ENCODE measurements at regions of chr12 and their contacts with region 1.

Region 1: GRCh38 chr12:46179683-46180452 is 89.0 kb downstream of the SLC38A1 start:
- DNase-seq: peak; percentile 76
- ATAC-seq: peak; percentile 70
- H3K4me3 ChIP-seq: no peak overlapping the region
- H3K27ac ChIP-seq: peak overlapping the region; percentile 47
- H3K4me1 ChIP-seq: peaks cover 34% of the 10 kb centered on the region
- H3K27me3 ChIP-seq: no peaks in the 10 kb centered on the region
- CTCF ChIP-seq: no peak
- EP300 ChIP-seq: peak; percentile 78 to 85; a peak in 3 of 4 replicates
- POLR2A ChIP-seq: no peak
- RAD21 ChIP-seq: no peak

Region 2: GRCh38 chr12:45368841-45369489 is 810.9 kb before region 1 on chr12:
- CTCF ChIA-PET with region 1: no interaction called
- POLR2A ChIA-PET with region 1: no interaction called
- RAD21 ChIA-PET with region 1: no interaction called
- SMC1A ChIA-PET with region 1: no interaction called
- in situ Hi-C with region 1: no loop called
- intact Hi-C with region 1: no loop called
- DNase-seq: no peak
- ATAC-seq: no peak
- H3K4me3 ChIP-seq: no peak overlapping the region
- H3K27ac ChIP-seq: no peak overlapping the region
- H3K4me1 ChIP-seq: no peaks in the 10 kb centered on the region
- H3K27me3 ChIP-seq: no peaks in the 10 kb centered on the region
- CTCF ChIP-seq: no peak
- EP300 ChIP-seq: no peak
- POLR2A ChIP-seq: no peak
- RAD21 ChIP-seq: no peak

Region 3: GRCh38 chr12:45828402-45828801 is 351.5 kb before region 1 on chr12:
- CTCF ChIA-PET with region 1: no interaction called
- POLR2A ChIA-PET with region 1: no interaction called
- RAD21 ChIA-PET with region 1: no interaction called
- SMC1A ChIA-PET with region 1: no interaction called
- in situ Hi-C with region 1: no loop called
- intact Hi-C with region 1: no loop called
- DNase-seq: peak; percentile 12
- ATAC-seq: peak; percentile 92
- H3K4me3 ChIP-seq: no peak overlapping the region
- H3K27ac ChIP-seq: no peak overlapping the region
- H3K4me1 ChIP-seq: peaks cover 9% of the 10 kb centered on the region
- H3K27me3 ChIP-seq: no peaks in the 10 kb centered on the region
- CTCF ChIP-seq: no peak
- EP300 ChIP-seq: no peak
- POLR2A ChIP-seq: no peak
- RAD21 ChIP-seq: no peak

Region 4: DNA sequence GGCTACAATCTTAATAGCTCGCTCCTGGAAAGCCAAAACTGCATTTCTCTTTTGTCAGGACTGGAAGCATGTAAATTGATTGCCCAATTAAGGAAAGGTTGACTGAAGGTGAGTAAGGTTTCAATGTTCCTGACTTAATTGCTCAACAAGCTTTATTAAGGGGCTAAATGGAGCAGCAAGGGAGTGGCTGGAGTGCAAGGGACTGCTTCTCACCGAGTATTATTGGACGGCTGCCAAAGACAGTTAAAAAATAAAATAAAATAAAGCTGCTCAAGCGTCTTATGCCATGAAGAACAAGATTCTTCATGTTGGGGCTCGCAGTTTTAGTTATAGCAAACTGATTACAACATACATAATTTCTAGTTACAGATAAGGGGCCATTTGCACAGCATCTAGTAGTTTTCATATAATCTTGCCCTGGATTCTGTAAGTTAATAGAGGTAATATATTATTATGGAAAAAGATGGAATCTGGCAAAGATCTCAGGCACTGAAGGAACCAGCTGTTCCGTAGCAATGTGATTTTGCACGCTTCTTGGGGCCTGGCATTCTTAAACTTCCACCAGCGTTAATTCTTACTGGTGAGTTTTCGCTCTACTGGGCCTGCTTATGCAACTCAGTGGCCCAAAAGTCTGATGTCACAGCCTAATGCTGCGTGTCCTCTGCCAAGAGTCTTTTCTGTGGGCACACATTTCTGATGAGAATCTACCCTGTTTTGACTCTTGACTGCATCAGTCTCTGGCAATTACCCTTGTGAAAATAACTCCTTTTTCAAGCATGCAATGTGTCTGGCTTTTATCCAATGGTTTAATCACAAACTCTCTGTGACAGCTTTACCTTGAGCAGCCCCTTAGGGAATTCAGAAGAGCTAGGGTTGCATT is 19.5 kb before region 1 on chr12:
- CTCF ChIA-PET with region 1: interaction called, 30 read pairs
- POLR2A ChIA-PET with region 1: interaction called, 4 read pairs
- RAD21 ChIA-PET with region 1: interaction called, 14 read pairs
- SMC1A ChIA-PET with region 1: interaction called, 9 read pairs
- in situ Hi-C with region 1: no loop called
- intact Hi-C with region 1: loop called (anchors 2 kb)
- DNase-seq: no peak
- ATAC-seq: no peak; the same call in 2 of the 3 replicates
- H3K4me3 ChIP-seq: no peak overlapping the region
- H3K27ac ChIP-seq: no peak overlapping the region
- H3K4me1 ChIP-seq: no peaks in the 10 kb centered on the region
- H3K27me3 ChIP-seq: no peaks in the 10 kb centered on the region
- CTCF ChIP-seq: no peak
- EP300 ChIP-seq: no peak
- POLR2A ChIP-seq: no peak
- RAD21 ChIP-seq: no peak

Region 5: GRCh38 chr12:46263140-46264016 is 83.5 kb after region 1 on chr12:
- CTCF ChIA-PET with region 1: interaction called, 5 read pairs
- POLR2A ChIA-PET with region 1: interaction called, 16 read pairs
- RAD21 ChIA-PET with region 1: interaction called, 23 read pairs
- SMC1A ChIA-PET with region 1: interaction called, 31 read pairs
- in situ Hi-C with region 1: no loop called
- intact Hi-C with region 1: no loop called
- DNase-seq: no peak
- ATAC-seq: no peak
- H3K4me3 ChIP-seq: peak overlapping the region; percentile 11
- H3K27ac ChIP-seq: peak overlapping the region; percentile 35
- H3K4me1 ChIP-seq: peaks cover 12% of the 10 kb centered on the region; the same call in 1 of the 2 replicates
- H3K27me3 ChIP-seq: no peaks in the 10 kb centered on the region
- CTCF ChIP-seq: no peak
- EP300 ChIP-seq: no peak
- POLR2A ChIP-seq: no peak
- RAD21 ChIP-seq: no peak

Region 6: GRCh38 chr12:46292755-46293402 is 113.0 kb after region 1 on chr12:
- CTCF ChIA-PET with region 1: no interaction called
- POLR2A ChIA-PET with region 1: no interaction called
- RAD21 ChIA-PET with region 1: no interaction called
- SMC1A ChIA-PET with region 1: no interaction called
- in situ Hi-C with region 1: no loop called
- intact Hi-C with region 1: no loop called
- DNase-seq: no peak
- ATAC-seq: no peak
- H3K4me3 ChIP-seq: no peak overlapping the region
- H3K27ac ChIP-seq: no peak overlapping the region
- H3K4me1 ChIP-seq: no peaks in the 10 kb centered on the region
- H3K27me3 ChIP-seq: no peaks in the 10 kb centered on the region
- CTCF ChIP-seq: peak in 1 of 3 experiments; percentile 7; a peak in 1 of 6 replicates
- EP300 ChIP-seq: no peak
- POLR2A ChIP-seq: no peak
- RAD21 ChIP-seq: peak; percentile 22; the same call in 1 of the 2 replicates

Measured in GM12878 (cell line).